Caco-2 (cell line): ENCODE measurements at regions of chr16 and their contacts with region 1.

Region 1: DNA sequence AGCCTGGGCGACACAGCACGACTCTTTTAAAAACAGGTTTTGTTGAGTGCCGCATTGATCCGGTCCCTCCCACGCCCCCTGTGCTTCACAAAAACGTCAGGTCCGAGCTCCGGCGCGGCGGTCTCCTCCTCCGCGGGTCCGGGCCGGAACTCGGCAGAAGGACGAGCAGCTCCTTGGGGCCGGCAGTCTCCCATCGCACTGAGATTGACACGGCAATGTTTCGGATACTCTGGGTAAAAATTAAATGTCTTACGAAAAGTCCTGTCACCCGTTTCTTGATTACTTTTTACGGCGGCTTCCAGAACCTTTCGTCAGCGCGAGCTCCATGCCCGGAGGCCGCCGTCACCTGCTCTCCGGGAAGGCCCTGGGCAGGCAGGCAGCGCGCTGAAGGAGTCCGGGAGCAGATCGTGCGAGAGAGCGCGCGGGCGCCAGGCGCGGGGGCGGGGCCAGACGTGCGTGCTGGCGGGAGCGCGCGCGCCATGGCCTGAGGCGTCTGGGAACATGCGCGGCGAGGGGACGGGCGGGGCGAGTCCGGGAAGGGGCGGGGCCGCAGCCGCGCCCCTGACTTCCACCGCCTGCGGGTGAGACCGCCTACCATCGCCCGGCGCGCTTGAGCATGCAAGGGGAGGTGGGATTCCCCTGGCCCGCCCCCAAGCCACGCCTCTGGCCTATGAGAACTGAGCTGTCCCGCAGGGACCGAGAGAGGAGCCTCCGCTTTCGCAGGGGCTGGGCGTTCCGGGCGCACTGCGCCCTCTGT is 11.7 kb upstream of the SRL start:
- DNase-seq: peak; percentile 98 to 99
- H3K4me3 ChIP-seq: peak overlapping the region; percentile 56
- H3K4me3 Mint-ChIP-seq: peak overlapping the region; percentile 90
- H3K27ac Mint-ChIP-seq: peak overlapping the region; percentile 96
- H3K4me1 ChIP-seq: no peaks in the 10 kb centered on the region
- H3K4me1 Mint-ChIP-seq: no peaks in the 10 kb centered on the region
- H3K27me3 ChIP-seq: no peaks in the 10 kb centered on the region
- H3K27me3 Mint-ChIP-seq: no peaks in the 10 kb centered on the region
- CTCF ChIP-seq: no peak

Region 2: GRCh38 chr16:3983081-3983520 is 270.5 kb before region 1 on chr16:
- CTCF ChIA-PET with region 1: interaction called, 15 read pairs
- POLR2A ChIA-PET with region 1: interaction called, 5 read pairs
- intact Hi-C with region 1: loop called (anchors 2 kb)
- DNase-seq: peak; percentile 70 to 78
- H3K4me3 ChIP-seq: no peak overlapping the region
- H3K4me3 Mint-ChIP-seq: no peak overlapping the region
- H3K27ac Mint-ChIP-seq: no peak overlapping the region
- H3K4me1 ChIP-seq: peaks cover 5% of the 10 kb centered on the region; the same call in 1 of the 2 replicates
- H3K4me1 Mint-ChIP-seq: no peaks in the 10 kb centered on the region
- H3K27me3 ChIP-seq: no peaks in the 10 kb centered on the region
- H3K27me3 Mint-ChIP-seq: no peaks in the 10 kb centered on the region
- CTCF ChIP-seq: peak; percentile 58 to 78

Region 3: DNA sequence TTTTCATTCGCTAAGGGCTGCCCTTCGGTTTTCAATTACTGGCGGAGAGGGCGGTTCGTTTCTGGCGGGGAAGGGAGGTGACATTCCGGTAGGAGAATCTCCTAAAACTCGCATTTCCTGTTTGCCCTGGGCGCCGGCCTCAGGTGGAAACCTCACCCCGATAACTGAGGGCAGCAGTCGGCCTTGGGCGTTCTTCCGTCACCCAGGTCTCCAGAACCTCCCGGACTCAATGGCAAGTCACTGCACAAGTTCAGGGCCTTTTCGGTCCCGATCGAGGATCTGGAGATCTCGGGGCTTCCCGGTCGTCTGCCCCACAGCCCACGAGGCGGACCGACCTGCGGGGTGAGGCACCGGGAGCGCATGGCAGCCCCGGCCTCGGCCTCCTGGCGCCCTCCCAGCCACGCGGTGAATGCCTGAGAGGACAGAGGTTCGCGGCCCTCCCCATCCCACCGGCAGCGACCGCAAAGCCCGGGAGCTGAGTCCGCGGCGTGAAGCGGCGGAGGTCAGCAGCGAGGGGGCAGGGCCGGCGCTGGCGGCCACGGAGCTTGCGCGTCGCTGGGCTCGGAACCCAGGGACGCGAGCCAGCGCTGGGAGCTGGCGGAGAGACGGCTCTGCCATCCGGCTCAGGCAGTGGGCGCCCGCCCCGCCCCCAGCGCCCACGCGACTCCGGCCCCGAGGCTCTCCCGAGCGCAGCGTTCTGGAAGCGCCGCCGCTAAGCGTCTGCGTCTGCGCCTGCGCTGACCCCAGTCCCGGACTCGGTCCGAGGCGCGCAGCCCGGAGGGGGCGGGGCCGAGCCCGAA is 70.1 kb before region 1 on chr16:
- CTCF ChIA-PET with region 1: interaction called, 13 read pairs
- POLR2A ChIA-PET with region 1: interaction called, 3 read pairs
- intact Hi-C with region 1: no loop called
- DNase-seq: peak; percentile 89 to 97
- H3K4me3 ChIP-seq: peak overlapping the region; percentile 78
- H3K4me3 Mint-ChIP-seq: peak overlapping the region; percentile 68
- H3K27ac Mint-ChIP-seq: peak overlapping the region; percentile 71
- H3K4me1 ChIP-seq: 0 out of 2 replicates have a peak, but pooled peaks cover 4% of the 10 kb centered on the region
- H3K4me1 Mint-ChIP-seq: peaks cover 14% of the 10 kb centered on the region
- H3K27me3 ChIP-seq: no peaks in the 10 kb centered on the region
- H3K27me3 Mint-ChIP-seq: no peaks in the 10 kb centered on the region
- CTCF ChIP-seq: no peak

Region 4: DNA sequence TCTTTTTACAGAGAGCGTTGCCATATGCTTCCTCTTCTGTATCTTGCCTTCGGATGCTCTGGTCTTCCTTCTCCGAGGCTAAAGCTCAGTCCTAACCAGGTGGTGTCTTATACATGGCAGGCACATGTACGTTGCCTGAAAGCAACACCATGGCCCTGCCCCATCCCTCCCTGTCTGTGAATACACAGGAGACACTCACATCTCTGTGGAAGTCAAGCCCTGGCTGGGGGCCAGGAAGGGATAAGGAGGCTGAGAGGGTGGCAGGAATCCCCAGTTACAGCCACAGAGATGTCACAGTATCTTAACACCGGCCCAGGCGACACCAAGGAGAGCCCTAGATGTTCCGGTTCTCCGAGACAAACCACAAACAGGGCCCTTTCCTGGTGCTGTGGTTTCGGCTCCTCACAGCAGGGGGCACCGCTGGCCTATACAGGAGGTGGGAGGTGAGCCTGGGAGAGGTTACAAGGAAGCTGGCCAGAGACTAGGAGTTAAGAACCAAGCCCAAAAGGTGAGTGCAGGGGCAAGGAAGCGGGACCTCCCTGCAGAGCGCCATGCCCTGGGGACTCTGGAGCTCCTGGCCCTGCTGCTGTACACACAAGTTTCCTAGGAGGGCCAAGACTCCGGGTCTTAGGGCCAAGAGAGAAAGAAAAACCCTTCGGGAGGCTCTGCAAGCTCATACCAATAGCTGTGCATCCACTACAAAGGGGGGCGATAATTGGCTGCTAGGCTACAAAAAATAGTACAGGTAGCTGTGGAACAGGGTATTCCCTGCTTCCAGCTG is 53.4 kb before region 1 on chr16:
- CTCF ChIA-PET with region 1: interaction called, 103 read pairs
- POLR2A ChIA-PET with region 1: interaction called, 14 read pairs
- intact Hi-C with region 1: loop called (anchors 1 kb)
- DNase-seq: peak; percentile 73 to 78
- H3K4me3 ChIP-seq: no peak overlapping the region
- H3K4me3 Mint-ChIP-seq: no peak overlapping the region
- H3K27ac Mint-ChIP-seq: peak overlapping the region; percentile 25
- H3K4me1 ChIP-seq: no peaks in the 10 kb centered on the region
- H3K4me1 Mint-ChIP-seq: no peaks in the 10 kb centered on the region
- H3K27me3 ChIP-seq: no peaks in the 10 kb centered on the region
- H3K27me3 Mint-ChIP-seq: no peaks in the 10 kb centered on the region
- CTCF ChIP-seq: peak; percentile 64 to 88

Region 5: DNA sequence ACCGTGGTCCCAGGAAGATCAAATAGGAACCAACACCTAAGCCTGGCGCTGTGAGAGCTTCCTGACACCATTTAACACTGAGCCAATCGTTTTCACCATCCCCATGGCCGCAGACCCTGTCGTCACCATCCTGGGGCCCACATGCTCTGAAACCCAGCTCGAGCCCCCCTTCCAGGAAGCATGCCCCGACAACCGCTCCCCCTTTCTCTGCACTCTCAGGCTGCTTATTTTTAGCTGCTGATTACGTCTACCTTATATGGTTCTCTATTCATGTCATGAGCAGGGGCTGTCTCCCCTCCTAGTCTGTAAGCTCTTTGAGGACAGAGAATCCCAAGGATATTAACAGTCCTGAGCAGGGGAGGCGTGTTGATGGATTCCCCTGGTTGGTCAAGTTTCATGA is 22.2 kb before region 1 on chr16:
- CTCF ChIA-PET with region 1: interaction called, 15 read pairs
- POLR2A ChIA-PET with region 1: no interaction called
- intact Hi-C with region 1: no loop called
- DNase-seq: no peak
- H3K4me3 ChIP-seq: no peak overlapping the region
- H3K4me3 Mint-ChIP-seq: no peak overlapping the region
- H3K27ac Mint-ChIP-seq: no peak overlapping the region
- H3K4me1 ChIP-seq: no peaks in the 10 kb centered on the region
- H3K4me1 Mint-ChIP-seq: no peaks in the 10 kb centered on the region
- H3K27me3 ChIP-seq: no peaks in the 10 kb centered on the region
- H3K27me3 Mint-ChIP-seq: no peaks in the 10 kb centered on the region
- CTCF ChIP-seq: no peak

Region 6: GRCh38 chr16:4402439-4403132 is 149.0 kb after region 1 on chr16:
- CTCF ChIA-PET with region 1: interaction called, 19 read pairs
- POLR2A ChIA-PET with region 1: no interaction called
- intact Hi-C with region 1: no loop called
- DNase-seq: peak; percentile 68 to 85
- H3K4me3 ChIP-seq: no peak overlapping the region
- H3K4me3 Mint-ChIP-seq: no peak overlapping the region
- H3K27ac Mint-ChIP-seq: no peak overlapping the region
- H3K4me1 ChIP-seq: no peaks in the 10 kb centered on the region
- H3K4me1 Mint-ChIP-seq: no peaks in the 10 kb centered on the region
- H3K27me3 ChIP-seq: no peaks in the 10 kb centered on the region
- H3K27me3 Mint-ChIP-seq: no peaks in the 10 kb centered on the region
- CTCF ChIP-seq: peak; percentile 84 to 87

Region 7: GRCh38 chr16:4487955-4488498 is 234.5 kb after region 1 on chr16:
- CTCF ChIA-PET with region 1: no interaction called
- POLR2A ChIA-PET with region 1: no interaction called
- intact Hi-C with region 1: no loop called
- DNase-seq: no peak
- H3K4me3 ChIP-seq: no peak overlapping the region
- H3K4me3 Mint-ChIP-seq: no peak overlapping the region
- H3K27ac Mint-ChIP-seq: no peak overlapping the region
- H3K4me1 ChIP-seq: peaks cover 14% of the 10 kb centered on the region
- H3K4me1 Mint-ChIP-seq: peaks cover 6% of the 10 kb centered on the region
- H3K27me3 ChIP-seq: no peaks in the 10 kb centered on the region
- H3K27me3 Mint-ChIP-seq: no peaks in the 10 kb centered on the region
- CTCF ChIP-seq: no peak